Heart right ventricle (tissue), 16 donors: ENCODE measurements at regions of chr3 and their contacts with region 1.

Region 1: DNA sequence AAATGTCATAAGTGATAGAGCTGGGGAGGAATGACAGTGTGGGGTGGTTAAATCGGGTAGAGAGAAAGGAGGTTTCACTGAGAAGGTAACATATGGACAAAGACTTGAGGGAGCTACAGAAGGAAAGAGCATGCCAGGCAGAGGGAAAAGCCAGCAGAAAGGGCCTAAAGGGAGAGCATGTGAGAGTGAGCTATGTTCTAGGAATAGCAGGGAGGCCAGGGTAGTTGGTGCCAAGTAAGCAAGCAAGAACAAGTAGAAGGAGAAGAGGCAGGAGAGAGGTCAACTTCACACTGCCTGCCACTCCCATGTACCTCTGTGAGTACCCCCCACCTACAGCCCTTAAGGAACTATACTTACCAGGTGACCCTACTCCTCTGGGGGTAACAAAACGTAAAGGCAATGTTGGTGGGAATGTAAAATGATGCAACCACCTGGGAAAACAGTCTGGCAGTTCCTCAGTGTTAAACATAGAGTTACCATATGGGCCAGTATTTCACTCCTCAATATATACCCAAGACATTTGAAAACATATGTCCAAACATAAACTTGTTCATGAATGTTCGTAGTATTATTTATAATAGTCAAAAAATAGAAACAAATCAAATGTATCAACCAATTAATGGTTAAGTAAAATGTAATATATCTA is 67.6 kb downstream of the SFMBT1 start:
- DNase-seq: peak in 1 of 2 donors; percentile 48
- ATAC-seq: peak; percentile 74 to 97 (median 94)
- H3K4me3 ChIP-seq: no peak overlapping the region
- H3K27ac ChIP-seq: peak overlapping the region in 9 of 10 donors; percentile 1 to 79 (median 67)
- H3K4me1 ChIP-seq: peaks cover 0 to 5% (median 3%) of the 10 kb centered on the region in 9 donors
- H3K27me3 ChIP-seq: no peaks in the 10 kb centered on the region
- CTCF ChIP-seq: no peak

Region 2: DNA sequence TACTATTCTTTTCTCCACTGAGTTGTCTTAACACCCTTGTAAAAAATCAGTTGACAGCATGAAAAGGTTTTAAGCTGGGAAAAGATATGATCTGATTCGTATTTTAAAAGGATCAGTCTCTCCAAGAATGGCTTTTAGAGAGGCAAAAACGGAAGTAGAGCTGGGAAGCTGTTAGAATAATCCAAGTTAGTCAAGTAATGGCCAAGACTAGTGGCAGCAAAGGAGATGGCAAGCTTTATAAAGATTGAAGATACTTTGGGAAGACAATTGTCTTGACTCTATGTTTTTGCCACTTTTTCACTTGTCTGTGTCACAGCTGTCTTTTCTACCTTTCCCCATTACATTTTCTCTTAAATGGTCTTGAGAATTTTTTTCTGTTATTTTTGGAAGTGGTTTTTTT is 1836.7 kb before region 1 on chr3:
- intact Hi-C with region 1: loop called in 1 of 10 experiments (anchors 10 kb)
- DNase-seq: no peak
- ATAC-seq: no peak
- H3K4me3 ChIP-seq: no peak overlapping the region
- H3K27ac ChIP-seq: no peak overlapping the region
- H3K4me1 ChIP-seq: no peaks in the 10 kb centered on the region
- H3K27me3 ChIP-seq: no peaks in the 10 kb centered on the region
- CTCF ChIP-seq: no peak

Region 3: DNA sequence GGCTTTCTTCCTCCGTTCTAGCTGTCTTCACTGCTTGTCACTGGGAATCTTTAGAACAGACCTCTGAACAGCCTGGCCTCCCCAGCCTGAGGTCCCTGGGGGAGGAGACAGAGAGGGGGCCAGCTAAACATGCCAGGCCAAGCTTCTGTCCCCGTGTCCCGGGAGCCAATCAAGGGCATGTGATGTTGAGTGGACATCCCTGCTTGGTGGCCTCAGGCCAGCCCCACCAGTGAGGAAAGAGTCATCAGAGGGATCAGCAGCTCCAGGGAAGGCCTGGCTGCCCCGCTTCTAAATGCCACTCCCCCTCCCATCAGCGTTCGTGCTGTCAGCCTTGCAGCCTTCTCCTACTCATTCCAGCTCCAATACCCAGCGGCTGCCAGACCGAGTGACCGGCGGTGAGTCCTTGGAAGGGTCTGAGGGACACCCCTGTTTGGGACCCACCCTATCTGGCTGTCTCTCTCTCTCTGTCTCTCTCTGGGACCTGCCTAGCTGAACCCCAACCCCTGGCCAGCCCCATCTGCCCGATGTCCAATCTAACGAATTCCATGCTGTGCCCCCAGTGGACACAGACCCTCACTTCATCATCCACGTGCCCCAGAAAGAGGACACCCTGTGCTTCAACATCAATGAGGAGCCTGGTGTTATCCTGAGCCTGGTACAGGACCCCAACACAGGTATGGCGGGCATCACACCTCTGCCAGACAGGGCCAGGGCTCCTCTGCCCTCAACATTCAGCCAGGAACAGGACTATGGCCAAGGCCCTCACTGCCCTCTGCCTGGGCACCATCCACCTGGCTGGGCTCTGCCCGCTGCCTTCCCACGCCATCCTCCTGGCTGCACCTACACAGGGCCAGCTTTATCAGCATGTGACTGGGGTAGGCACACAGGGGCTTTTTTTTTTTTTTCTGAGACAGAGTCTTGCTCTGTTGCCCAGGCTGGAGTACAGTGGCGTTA is 190.3 kb before region 1 on chr3:
- intact Hi-C with region 1: no loop called
- DNase-seq: no peak
- ATAC-seq: peak in 5 of 8 donors; percentile 6 to 41 (median 25)
- H3K4me3 ChIP-seq: no peak overlapping the region
- H3K27ac ChIP-seq: no peak overlapping the region
- H3K4me1 ChIP-seq: no peaks in the 10 kb centered on the region
- H3K27me3 ChIP-seq: peaks cover 0 to 3% (median 0%) of the 10 kb centered on the region in 7 donors
- CTCF ChIP-seq: no peak